Dorsolateral prefrontal cortex (tissue), 120 donors: ENCODE measurements at regions of chr19 and their contacts with region 1.

Region 1: GRCh38 chr19:10769533-10770491 is 51.9 kb downstream of the DNM2 start:
- DNase-seq: peak; percentile 59 to 78 (median 67)
- H3K4me3 ChIP-seq: peak overlapping the region in 21 of 59 donors; percentile 1 to 40 (median 18)
- H3K27ac ChIP-seq: peak overlapping the region; percentile 60 to 97 (median 92)
- H3K27me3 ChIP-seq: no peaks in the 10 kb centered on the region
- CTCF ChIP-seq: peak in 49 of 56 donors; percentile 6 to 73 (median 46)

Region 2: GRCh38 chr19:10580979-10581631 is 188.7 kb before region 1 on chr19:
- intact Hi-C with region 1: loop called in 1 of 2 experiments (anchors 10 kb)
- DNase-seq: peak; percentile 85 to 96 (median 90)
- H3K4me3 ChIP-seq: peak overlapping the region in 45 of 59 donors; percentile 2 to 55 (median 38)
- H3K27ac ChIP-seq: no peak overlapping the region
- H3K27me3 ChIP-seq: no peaks in the 10 kb centered on the region
- CTCF ChIP-seq: peak; percentile 94 to 100 (median 99)

Region 3: DNA sequence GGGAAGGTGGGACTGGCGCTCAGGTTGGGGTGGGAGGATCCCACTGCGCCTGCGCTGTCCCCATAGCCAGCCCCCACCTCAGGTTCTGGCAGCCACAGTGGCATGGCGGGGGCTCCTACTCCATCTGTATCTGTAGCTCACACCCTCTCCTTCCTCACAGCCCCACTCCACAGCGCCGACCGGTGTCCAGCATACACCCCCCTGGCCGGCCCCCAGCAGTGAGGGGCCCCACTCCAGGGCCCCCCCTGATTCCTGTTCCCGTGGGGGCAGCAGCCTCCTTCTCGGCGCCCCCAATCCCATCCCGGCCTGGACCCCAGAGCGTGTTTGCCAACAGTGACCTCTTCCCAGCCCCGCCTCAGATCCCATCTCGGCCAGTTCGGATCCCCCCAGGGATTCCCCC is 60.2 kb after region 1 on chr19:
- intact Hi-C with region 1: loop called in 1 of 2 experiments (anchors 5 kb)
- DNase-seq: no peak
- H3K4me3 ChIP-seq: no peak overlapping the region
- H3K27ac ChIP-seq: peak overlapping the region in 7 of 59 donors; percentile 6 to 40 (median 18)
- H3K27me3 ChIP-seq: no peaks in the 10 kb centered on the region
- CTCF ChIP-seq: no peak

Region 4: DNA sequence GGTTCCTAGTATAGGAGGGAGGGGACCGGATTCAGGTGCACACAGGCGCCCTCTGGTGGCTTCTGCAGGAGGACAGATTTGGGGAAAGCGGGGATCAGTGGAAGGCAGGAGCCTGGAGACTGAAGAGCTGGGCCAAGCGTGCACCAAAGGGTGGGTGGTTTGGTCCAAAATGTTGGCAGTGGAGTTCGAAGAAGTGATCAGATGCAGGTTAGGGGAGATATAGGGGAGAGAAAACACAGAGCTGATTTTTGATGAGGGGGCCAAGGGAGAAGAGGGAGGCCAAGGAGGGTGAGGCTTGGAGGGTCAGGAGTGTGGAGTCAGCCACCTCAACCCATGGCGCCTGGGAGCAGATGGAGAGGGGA is 94.7 kb after region 1 on chr19:
- intact Hi-C with region 1: loop called in 1 of 2 experiments (anchors 2 kb)
- DNase-seq: peak; percentile 71 to 92 (median 84)
- H3K4me3 ChIP-seq: peak overlapping the region in 8 of 59 donors; percentile 11 to 44 (median 28)
- H3K27ac ChIP-seq: peak overlapping the region in 34 of 59 donors; percentile 12 to 59 (median 35)
- H3K27me3 ChIP-seq: no peaks in the 10 kb centered on the region
- CTCF ChIP-seq: peak; percentile 71 to 93 (median 87)